ENCODE measurements at regions of chr7 and their contacts with region 1.

Region 1: GRCh38 chr7:98420966-98421612 is 20.2 kb upstream of the BAIAP2L1 start:
- DNase-seq: peak; percentile 76
- ATAC-seq: peak; percentile 56
- H3K4me3 ChIP-seq: 0 out of 6 replicates have a peak overlapping the region, but pooled peaks of 1 of the 3 experiments have one; percentile 46
- H3K27ac ChIP-seq: no peak overlapping the region
- H3K4me1 ChIP-seq: peaks cover 51% of the 10 kb centered on the region
- H3K27me3 ChIP-seq: no peaks in the 10 kb centered on the region
- CTCF ChIP-seq: peak; percentile 99
- EP300 ChIP-seq: no peak
- POLR2A ChIP-seq: no peak
- RAD21 ChIP-seq: peak; percentile 79

Region 2: DNA sequence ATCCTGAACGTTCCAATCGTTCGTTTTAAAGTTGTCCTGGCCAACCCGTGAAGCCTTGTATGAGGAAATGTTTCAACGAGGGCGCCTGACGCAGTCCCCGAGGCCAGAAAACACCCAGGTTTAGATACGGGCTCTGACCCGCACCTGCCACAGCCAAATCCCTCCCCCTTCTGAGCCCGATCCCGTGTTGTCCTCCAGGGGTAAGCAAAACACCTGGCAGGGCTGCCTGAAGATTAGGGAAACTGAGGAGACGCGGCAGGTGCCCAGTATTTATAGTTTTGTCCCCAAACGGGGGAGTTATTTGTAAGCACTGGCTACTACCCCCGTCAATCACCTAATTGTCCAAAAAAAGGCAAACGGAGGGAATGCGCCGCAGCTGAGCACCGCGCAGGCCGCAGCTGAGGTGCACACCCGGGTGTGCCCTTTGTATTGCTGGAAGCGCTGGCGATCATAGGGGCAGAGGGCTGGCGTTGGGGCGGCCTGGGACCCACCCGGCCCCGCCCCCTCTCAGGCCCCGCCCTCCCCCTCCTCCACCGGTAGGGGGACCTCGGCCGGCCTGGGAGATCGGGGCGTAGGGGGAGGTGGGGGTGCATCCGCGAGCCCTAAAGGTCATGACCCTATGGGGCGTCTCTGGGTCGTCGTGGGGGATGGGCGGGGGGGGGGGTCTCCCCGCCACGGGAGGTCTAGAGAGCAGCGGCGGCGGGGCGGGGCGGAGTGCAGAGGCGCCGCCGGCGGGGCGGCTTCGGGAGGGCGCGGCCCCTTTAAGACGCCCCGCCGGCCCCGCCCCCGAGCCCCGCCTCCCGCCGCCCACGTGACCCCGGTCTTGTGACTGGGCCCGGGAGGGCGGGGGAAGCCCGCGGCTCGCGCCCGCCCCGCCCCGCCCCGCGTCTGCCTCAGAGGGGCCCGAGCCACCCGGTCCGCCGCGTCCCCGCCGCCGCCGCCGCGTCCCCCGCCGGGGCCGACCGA is 140.0 kb before region 1 on chr7 and contains the start of gene BRI3:
- CTCF ChIA-PET with region 1: no interaction called
- POLR2A ChIA-PET with region 1: interaction called, 5 read pairs
- in situ Hi-C with region 1: loop called (anchors 5 kb)
- intact Hi-C with region 1: no loop called
- DNase-seq: peak; percentile 78
- ATAC-seq: peak; percentile 81
- H3K4me3 ChIP-seq: peak within 1 kb of the TSS; percentile 77 to 91 (median 85)
- H3K27ac ChIP-seq: peak within 1 kb of the TSS; percentile 84
- H3K4me1 ChIP-seq: peaks cover 76% of the 10 kb centered on the region
- H3K27me3 ChIP-seq: no peaks in the 10 kb centered on the region; a peak in 1 of 5 replicates
- CTCF ChIP-seq: no peak
- EP300 ChIP-seq: no peak
- POLR2A ChIP-seq: peak in 1 of 2 experiments; percentile 96; a peak in 2 of 4 replicates
- RAD21 ChIP-seq: peak; percentile 19; the same call in 1 of the 2 replicates
- total RNA-seq, gene BRI3: 37.2 and 54.0 TPM in 2 replicates

Region 3: DNA sequence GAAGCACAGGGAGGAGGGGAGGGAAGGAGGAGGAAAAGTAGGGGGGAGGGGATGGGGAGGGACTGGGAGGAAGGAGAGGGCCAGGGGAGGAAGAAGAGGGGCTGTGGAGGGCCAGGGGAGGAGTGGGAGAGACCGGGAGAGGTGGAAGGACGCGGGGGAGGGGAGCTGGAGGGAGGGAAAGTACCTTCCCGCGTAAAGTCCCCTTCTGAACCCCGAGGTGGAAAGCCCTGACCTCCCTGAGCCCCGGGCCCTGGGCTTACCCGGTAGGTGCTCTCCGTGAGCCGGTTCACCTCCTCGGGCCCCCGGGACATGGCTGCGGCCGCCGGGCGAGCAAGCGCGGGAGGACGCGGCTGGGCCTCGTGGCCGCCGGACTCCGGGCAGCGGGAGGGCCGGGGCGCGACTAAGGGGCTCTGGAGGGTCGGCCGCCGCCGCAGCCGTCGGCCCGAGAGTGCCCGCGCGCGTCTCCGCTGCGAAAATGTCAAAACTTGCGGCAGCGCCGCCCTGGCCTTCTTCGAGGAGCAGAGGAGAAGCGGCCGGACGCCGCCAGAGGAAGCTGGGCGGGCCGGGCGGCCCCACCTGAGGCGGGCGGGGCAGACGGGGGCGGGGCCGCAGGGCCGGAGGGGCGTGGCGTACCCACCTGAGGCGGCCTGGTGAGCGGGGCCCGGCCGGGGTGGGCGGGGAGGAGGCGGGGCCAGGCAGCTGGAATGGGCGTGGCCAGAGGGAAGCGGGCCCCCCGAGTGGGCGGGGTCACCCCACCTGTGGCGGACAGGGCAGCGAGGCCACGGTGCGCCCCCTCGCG is 20.3 kb before region 1 on chr7 and contains the start of gene BAIAP2L1:
- CTCF ChIA-PET with region 1: no interaction called
- POLR2A ChIA-PET with region 1: interaction called, 103 read pairs
- in situ Hi-C with region 1: no loop called
- intact Hi-C with region 1: loop called (anchors 1 kb)
- DNase-seq: peak; percentile 80
- ATAC-seq: peak; percentile 86
- H3K4me3 ChIP-seq: peak within 1 kb of the TSS; percentile 70 to 85 (median 77)
- H3K27ac ChIP-seq: peak within 1 kb of the TSS; percentile 77
- H3K4me1 ChIP-seq: peaks cover 57% of the 10 kb centered on the region
- H3K27me3 ChIP-seq: no peaks in the 10 kb centered on the region
- CTCF ChIP-seq: no peak
- EP300 ChIP-seq: no peak
- POLR2A ChIP-seq: no peak; a peak in 1 of 4 replicates
- RAD21 ChIP-seq: peak; percentile 80; the same call in 1 of the 2 replicates
- total RNA-seq, gene BAIAP2L1: 13.0 and 13.7 TPM in 2 replicates

Region 4: DNA sequence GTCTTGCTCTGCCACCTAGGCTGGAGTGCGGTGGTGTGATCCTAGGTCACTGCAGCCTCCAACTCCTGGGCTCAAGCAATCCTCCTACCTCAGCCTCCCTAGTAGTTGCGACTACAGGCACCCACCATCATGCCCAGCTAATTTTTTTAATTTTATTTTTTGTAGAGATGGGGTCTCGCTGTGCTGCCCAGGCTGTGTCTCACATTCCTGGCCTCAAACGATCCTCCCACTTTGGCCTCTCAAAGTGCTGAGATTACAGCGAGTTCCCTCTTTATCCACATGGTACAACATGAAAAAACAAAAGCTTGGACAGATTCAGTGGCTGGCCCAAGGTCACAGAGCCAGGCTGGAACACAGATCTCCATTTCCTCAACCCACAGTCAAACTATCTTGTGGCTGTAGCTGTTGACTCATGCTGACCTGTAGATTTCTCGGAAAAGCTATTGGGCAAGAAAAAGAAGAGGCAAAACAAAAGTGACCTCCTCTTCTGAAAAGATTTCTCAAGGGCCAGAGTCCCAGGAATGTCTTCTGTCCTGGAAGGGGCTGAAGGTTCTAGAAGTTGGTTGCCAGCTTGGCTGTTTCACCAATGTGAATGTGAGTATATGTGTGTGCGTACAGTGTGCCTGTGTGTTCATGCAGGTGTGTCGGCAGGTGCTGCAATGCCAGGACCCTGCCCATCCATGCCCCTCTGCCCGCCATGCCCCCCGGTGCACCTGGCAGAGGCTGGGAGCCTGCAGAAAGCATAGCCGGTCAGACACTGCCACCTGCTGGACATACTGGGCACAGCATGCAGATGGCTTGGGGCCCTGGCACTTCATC is 420.3 kb after region 1 on chr7:
- CTCF ChIA-PET with region 1: interaction called, 3 read pairs
- POLR2A ChIA-PET with region 1: no interaction called
- in situ Hi-C with region 1: loop called (anchors 5 kb)
- intact Hi-C with region 1: no loop called
- DNase-seq: peak; percentile 20
- ATAC-seq: peak; percentile 73
- H3K4me3 ChIP-seq: no peak overlapping the region
- H3K27ac ChIP-seq: no peak overlapping the region
- H3K4me1 ChIP-seq: no peaks in the 10 kb centered on the region
- H3K27me3 ChIP-seq: peaks cover 3 to 9% of the 10 kb centered on the region in 2 experiments; a peak in 2 of 5 replicates
- CTCF ChIP-seq: peak; percentile 98
- EP300 ChIP-seq: no peak
- POLR2A ChIP-seq: no peak
- RAD21 ChIP-seq: peak; percentile 88

Region 5: GRCh38 chr7:98878365-98879165 is 457.5 kb after region 1 on chr7 and contains the start of gene TRRAP:
- CTCF ChIA-PET with region 1: no interaction called
- POLR2A ChIA-PET with region 1: interaction called, 11 read pairs
- in situ Hi-C with region 1: no loop called
- intact Hi-C with region 1: no loop called
- DNase-seq: peak; percentile 35
- ATAC-seq: peak; percentile 87
- H3K4me3 ChIP-seq: peak within 1 kb of the TSS; percentile 89 to 100 (median 97)
- H3K27ac ChIP-seq: peak within 1 kb of the TSS; percentile 87
- H3K4me1 ChIP-seq: peaks cover 45% of the 10 kb centered on the region
- H3K27me3 ChIP-seq: peaks cover 1 to 9% of the 10 kb centered on the region in 2 experiments; a peak in 2 of 5 replicates
- CTCF ChIP-seq: peak; percentile 81
- EP300 ChIP-seq: no peak
- POLR2A ChIP-seq: peak; percentile 58 to 69
- RAD21 ChIP-seq: 0 out of 2 replicates have a peak, but pooled peaks have one; percentile 38
- total RNA-seq, gene TRRAP: 10.5 and 21.3 TPM in 2 replicates

Measured in HepG2 (cell line).